ENCODE measurements at regions of chr9 and their contacts with region 1.

Region 1: GRCh38 chr9:33131790-33132772 is 35.1 kb downstream of the B4GALT1 start:
- DNase-seq: peak in 1 of 2 donors; percentile 34
- ATAC-seq: no peak
- H3K4me3 ChIP-seq: no peak overlapping the region
- H3K27ac ChIP-seq: peak overlapping the region in 2 of 4 donors; percentile 43 to 58
- H3K4me1 ChIP-seq: peaks cover 30 to 64% of the 10 kb centered on the region in 2 donors
- H3K27me3 ChIP-seq: no peaks in the 10 kb centered on the region
- CTCF ChIP-seq: no peak
- POLR2A ChIP-seq: no peak

Region 2: GRCh38 chr9:33106827-33107621 is 25.1 kb before region 1 on chr9:
- in situ Hi-C with region 1: no loop called
- intact Hi-C with region 1: loop called (anchors 2 kb)
- DNase-seq: peak in 1 of 2 donors; percentile 72
- ATAC-seq: peak; percentile 35 to 76
- H3K4me3 ChIP-seq: no peak overlapping the region
- H3K27ac ChIP-seq: peak overlapping the region; percentile 68 to 76 (median 73)
- H3K4me1 ChIP-seq: peaks cover 20 to 27% of the 10 kb centered on the region in 2 donors
- H3K27me3 ChIP-seq: no peaks in the 10 kb centered on the region
- CTCF ChIP-seq: no peak
- POLR2A ChIP-seq: no peak

Measured in gastrocnemius medialis (tissue), 4 donors.